Prostate gland (tissue), 2 donors: ENCODE measurements at regions of chr19 and their contacts with region 1.

Region 1: GRCh38 chr19:51654783-51655182 is 8.2 kb upstream of the SIGLEC14 start:
- DNase-seq: no peak
- H3K4me3 ChIP-seq: no peak overlapping the region
- H3K27ac ChIP-seq: no peak overlapping the region
- H3K4me1 ChIP-seq: no peaks in the 10 kb centered on the region
- H3K27me3 ChIP-seq: no peaks in the 10 kb centered on the region
- CTCF ChIP-seq: no peak
- POLR2A ChIP-seq: no peak

Region 2: GRCh38 chr19:51473009-51473707 is 181.6 kb before region 1 on chr19:
- intact Hi-C with region 1: loop called (anchors 5 kb)
- DNase-seq: peak; percentile 75
- H3K4me3 ChIP-seq: no peak overlapping the region
- H3K27ac ChIP-seq: no peak overlapping the region
- H3K4me1 ChIP-seq: no peaks in the 10 kb centered on the region
- H3K27me3 ChIP-seq: no peaks in the 10 kb centered on the region
- CTCF ChIP-seq: peak; percentile 44 to 84 (median 74)
- POLR2A ChIP-seq: no peak

Region 3: DNA sequence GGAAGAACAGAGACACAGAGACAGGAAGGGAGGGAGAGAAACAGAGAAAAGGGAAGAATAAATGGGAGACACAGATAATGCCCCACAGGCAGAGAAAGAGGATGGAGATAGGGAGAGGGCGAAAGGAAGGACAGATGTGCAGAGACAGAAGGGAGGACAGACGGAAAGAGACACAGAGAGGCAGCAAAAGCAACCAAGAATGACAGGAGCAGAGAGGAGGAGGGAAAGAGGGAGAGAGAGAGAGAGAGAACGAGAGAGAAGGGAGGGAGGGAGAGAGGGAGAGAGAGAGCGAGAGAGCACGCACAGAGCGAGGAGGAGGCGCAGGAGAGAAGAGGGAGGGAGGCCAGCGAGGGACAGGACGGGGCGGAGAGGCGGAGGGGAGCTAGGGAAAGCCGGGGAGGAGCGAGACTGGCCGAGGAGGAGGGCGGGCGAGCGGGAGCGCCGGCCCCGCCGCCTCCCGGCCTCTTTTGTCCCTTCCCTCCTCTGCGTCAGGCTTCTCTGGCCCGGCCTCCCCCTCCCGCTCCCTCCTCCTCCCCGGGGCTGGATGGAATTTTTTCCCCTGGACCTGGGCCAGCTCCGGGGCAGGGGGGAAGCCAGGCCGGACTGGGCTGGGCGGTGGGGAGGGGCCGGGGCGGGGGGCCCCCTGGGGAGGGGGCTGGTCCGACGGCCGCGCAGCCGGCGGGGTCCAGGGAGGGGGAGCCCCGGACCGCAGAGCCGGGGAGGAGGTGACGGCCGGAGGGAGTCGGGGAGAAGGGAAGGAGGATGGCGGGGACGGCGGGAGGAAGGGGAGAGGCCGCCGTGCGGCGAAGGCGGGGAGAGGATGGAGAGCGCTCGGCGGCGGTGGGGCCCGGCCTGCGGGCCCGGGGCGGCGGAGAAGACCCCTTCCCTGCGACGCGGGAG is 34.1 kb after region 1 on chr19:
- intact Hi-C with region 1: no loop called
- DNase-seq: peak; percentile 86
- H3K4me3 ChIP-seq: peak overlapping the region; percentile 70 to 99
- H3K27ac ChIP-seq: peak overlapping the region; percentile 94 to 98
- H3K4me1 ChIP-seq: peaks cover 7% of the 10 kb centered on the region
- H3K27me3 ChIP-seq: no peaks in the 10 kb centered on the region
- CTCF ChIP-seq: peak in 2 of 4 experiments; percentile 49 to 62
- POLR2A ChIP-seq: peak; percentile 82